ENCODE measurements at regions of chr20 and their contacts with region 1.

Region 1: DNA sequence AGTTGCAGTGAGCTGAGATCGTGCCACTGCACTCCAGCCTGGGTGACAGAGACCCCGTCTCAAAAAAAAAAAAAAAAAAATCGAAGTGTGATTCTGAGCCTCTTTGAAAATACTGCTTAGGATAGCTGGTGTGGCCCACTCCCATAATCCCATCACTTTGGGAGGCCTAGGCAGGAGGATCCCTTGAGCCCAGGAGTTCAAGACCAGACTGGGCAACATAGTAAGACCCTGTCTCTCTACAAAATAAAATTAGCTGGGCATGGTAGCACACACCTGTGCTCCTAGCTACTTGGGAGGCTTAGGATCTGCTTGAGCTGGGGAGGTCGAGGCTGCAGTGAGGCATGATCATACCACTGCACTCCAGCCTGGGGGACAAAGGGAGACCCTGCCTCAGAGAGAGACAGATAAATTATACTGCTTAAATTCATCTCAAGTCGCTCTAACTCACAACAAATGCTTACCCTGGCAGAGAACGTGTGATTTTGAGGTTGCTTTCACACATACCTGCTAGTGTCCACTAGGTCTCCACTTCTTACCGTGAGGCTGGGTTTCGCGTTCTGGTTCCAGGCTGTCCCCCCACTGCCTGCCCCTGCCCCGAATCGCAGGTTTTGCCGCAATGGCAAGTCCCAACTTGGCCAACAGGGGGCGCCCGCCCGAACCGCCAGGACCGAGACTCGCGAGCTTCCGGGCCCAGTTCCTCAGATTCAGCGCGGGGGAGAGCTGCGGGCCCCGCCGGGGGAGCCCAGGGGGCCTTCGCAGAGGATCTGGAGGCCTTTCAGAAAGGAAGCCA is 12.3 kb upstream of the TMC2 start:
- DNase-seq: peak; percentile 95
- ATAC-seq: peak; percentile 81
- H3K4me3 Mint-ChIP-seq: peak overlapping the region; percentile 91
- H3K27ac Mint-ChIP-seq: no peak overlapping the region
- H3K4me1 Mint-ChIP-seq: peaks cover 3% of the 10 kb centered on the region
- H3K27me3 Mint-ChIP-seq: peaks cover 88% of the 10 kb centered on the region
- CTCF ChIP-seq: peak; percentile 98

Region 2: GRCh38 chr20:2476742-2477615 is 47.1 kb before region 1 on chr20:
- CTCF ChIA-PET with region 1: interaction called, 26 read pairs
- POLR2A ChIA-PET with region 1: no interaction called
- DNase-seq: no peak
- ATAC-seq: peak; percentile 92
- H3K4me3 Mint-ChIP-seq: no peak overlapping the region
- H3K27ac Mint-ChIP-seq: 0 out of 2 replicates have a peak overlapping the region, but pooled peaks have one; percentile 2
- H3K4me1 Mint-ChIP-seq: peaks cover 23% of the 10 kb centered on the region
- H3K27me3 Mint-ChIP-seq: no peaks in the 10 kb centered on the region
- CTCF ChIP-seq: no peak

Region 3: GRCh38 chr20:2538931-2539720 is 15.0 kb after region 1 on chr20:
- CTCF ChIA-PET with region 1: interaction called, 13 read pairs
- POLR2A ChIA-PET with region 1: interaction called, 3 read pairs
- DNase-seq: no peak
- ATAC-seq: no peak
- H3K4me3 Mint-ChIP-seq: no peak overlapping the region
- H3K27ac Mint-ChIP-seq: no peak overlapping the region
- H3K4me1 Mint-ChIP-seq: peaks cover 8% of the 10 kb centered on the region
- H3K27me3 Mint-ChIP-seq: peaks cover 7% of the 10 kb centered on the region
- CTCF ChIP-seq: no peak

Region 4: DNA sequence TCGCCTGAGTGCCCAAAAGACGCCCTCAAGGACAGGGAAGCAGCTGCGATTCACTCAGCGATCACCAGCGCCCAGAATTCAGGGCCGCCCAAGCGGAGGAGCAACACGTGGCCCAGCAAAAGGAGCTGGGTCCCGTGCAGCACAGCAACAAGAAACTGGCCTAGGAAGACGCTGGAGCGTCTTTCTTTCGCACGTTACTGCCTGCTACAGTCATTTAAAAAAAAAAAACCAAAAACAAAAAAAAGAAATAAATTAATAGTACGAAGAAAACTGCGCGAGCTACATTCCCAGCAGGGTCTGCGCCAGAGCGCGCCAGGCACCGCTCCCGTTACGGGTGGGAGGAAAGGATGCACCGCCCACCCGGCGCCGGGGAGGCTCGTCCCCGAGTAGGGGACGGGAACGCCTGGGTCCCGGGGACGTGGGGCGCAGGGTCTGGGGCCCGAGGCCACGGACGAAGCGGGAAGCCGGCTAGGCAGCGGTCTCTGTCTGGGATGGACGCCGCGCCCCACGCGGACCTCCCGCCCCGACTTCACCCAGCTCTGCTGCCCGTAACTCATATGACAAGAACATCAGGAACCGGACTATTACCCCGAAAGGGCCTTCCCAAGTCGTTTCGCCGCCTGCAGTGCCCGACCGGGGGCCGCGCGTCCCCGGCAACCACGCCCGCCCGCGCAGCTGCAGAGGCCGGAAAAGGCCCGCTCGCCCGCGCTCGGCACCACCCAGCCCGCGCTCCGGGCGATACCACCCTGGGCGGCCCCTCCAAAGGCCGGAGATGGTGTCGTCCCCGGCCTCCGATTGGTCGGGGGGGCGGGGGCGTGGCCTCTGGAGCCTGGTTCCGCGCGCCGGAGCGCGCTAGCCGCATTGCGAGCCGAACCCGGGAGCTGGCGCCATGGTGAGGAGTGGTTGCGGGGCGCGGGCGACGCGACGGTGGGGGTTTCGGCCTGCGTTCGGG is 127.9 kb after region 1 on chr20 and contains the start of gene NOP56:
- CTCF ChIA-PET with region 1: interaction called, 30 read pairs
- POLR2A ChIA-PET with region 1: interaction called, 3 read pairs
- DNase-seq: peak; percentile 91
- ATAC-seq: peak; percentile 80
- H3K4me3 Mint-ChIP-seq: peak within 1 kb of the TSS; percentile 91
- H3K27ac Mint-ChIP-seq: peak within 1 kb of the TSS; percentile 88
- H3K4me1 Mint-ChIP-seq: peaks cover 24% of the 10 kb centered on the region
- H3K27me3 Mint-ChIP-seq: no peaks in the 10 kb centered on the region
- CTCF ChIP-seq: no peak
- total RNA-seq, gene NOP56: 484 to 634 TPM (median 500 TPM) in 3 replicates

Region 5: DNA sequence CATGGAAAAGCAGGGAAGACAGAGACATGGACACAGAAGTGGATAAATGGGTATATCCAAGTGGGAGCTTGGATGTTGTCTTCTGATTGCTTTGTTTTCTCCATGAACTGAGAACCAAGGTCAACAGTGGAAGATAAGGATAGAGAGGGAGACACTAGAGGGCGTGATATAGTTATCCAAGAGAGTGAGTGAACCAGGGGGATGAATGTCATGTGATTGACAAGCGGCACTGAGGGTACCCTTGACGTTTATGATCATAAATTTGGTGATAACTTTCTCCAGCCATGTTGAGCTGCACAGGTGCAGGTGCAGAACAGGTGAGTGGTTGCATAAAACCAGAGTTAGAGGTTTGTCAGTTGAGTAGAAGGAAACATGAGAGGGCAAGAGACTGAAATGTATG is 189.2 kb after region 1 on chr20:
- CTCF ChIA-PET with region 1: no interaction called
- POLR2A ChIA-PET with region 1: no interaction called
- DNase-seq: no peak
- ATAC-seq: peak; percentile 71
- H3K4me3 Mint-ChIP-seq: no peak overlapping the region
- H3K27ac Mint-ChIP-seq: no peak overlapping the region
- H3K4me1 Mint-ChIP-seq: peaks cover 5% of the 10 kb centered on the region
- H3K27me3 Mint-ChIP-seq: peaks cover 2% of the 10 kb centered on the region; the same call in 1 of the 2 replicates
- CTCF ChIP-seq: no peak

Measured in WTC11 (cell line).